ENCODE measurements at regions of chr17 and their contacts with region 1.

Region 1: GRCh38 chr17:44820631-44821212 is 9.4 kb downstream of the GJC1 start:
- DNase-seq: peak; percentile 95
- ATAC-seq: peak; percentile 100
- H3K4me3 ChIP-seq: peak overlapping the region; percentile 51
- H3K27ac ChIP-seq: peak overlapping the region; percentile 62
- H3K4me1 ChIP-seq: peaks cover 23% of the 10 kb centered on the region
- H3K27me3 ChIP-seq: no peaks in the 10 kb centered on the region
- CTCF ChIP-seq: no peak

Region 2: DNA sequence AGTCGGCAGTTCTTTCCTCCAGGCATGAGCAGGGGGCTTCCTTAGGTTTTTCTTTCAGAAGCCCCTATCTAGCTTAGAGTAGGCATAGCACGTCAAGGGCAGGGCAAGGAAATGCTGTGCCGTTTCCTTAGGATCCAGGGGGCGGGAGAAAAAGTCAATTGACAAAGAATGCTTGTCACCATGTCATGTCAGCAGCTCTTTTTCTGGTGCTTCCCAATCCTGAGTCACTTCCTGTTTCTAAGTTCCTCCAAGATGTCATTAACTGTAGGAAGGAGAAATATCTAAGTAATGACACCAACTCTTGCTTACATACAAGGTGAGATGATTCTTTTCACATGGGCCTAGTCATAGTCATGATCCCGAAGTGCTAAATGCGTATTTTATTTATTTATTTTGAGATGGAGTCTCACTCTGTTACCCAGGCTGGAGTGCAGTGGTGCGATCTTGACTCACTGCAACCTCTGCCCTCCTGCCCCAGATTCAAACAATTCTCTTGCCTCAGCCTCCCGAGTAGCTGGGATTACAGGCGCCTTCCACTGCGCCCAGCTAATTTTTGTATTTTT is 25.8 kb before region 1 on chr17:
- CTCF ChIA-PET with region 1: interaction called, 3 read pairs
- POLR2A ChIA-PET with region 1: interaction called, 3 read pairs
- intact Hi-C with region 1: loop called (anchors 1 kb)
- DNase-seq: peak; percentile 94
- ATAC-seq: peak; percentile 84
- H3K4me3 ChIP-seq: no peak overlapping the region
- H3K27ac ChIP-seq: peak overlapping the region; percentile 82
- H3K4me1 ChIP-seq: peaks cover 24% of the 10 kb centered on the region
- H3K27me3 ChIP-seq: no peaks in the 10 kb centered on the region
- CTCF ChIP-seq: no peak

Region 3: GRCh38 chr17:44837243-44837642 is 16.5 kb after region 1 on chr17:
- CTCF ChIA-PET with region 1: interaction called, 10 read pairs
- POLR2A ChIA-PET with region 1: no interaction called
- intact Hi-C with region 1: no loop called
- DNase-seq: peak; percentile 42
- ATAC-seq: no peak
- H3K4me3 ChIP-seq: no peak overlapping the region
- H3K27ac ChIP-seq: no peak overlapping the region
- H3K4me1 ChIP-seq: no peaks in the 10 kb centered on the region; the same call in 1 of the 2 replicates
- H3K27me3 ChIP-seq: no peaks in the 10 kb centered on the region
- CTCF ChIP-seq: no peak

Region 4: DNA sequence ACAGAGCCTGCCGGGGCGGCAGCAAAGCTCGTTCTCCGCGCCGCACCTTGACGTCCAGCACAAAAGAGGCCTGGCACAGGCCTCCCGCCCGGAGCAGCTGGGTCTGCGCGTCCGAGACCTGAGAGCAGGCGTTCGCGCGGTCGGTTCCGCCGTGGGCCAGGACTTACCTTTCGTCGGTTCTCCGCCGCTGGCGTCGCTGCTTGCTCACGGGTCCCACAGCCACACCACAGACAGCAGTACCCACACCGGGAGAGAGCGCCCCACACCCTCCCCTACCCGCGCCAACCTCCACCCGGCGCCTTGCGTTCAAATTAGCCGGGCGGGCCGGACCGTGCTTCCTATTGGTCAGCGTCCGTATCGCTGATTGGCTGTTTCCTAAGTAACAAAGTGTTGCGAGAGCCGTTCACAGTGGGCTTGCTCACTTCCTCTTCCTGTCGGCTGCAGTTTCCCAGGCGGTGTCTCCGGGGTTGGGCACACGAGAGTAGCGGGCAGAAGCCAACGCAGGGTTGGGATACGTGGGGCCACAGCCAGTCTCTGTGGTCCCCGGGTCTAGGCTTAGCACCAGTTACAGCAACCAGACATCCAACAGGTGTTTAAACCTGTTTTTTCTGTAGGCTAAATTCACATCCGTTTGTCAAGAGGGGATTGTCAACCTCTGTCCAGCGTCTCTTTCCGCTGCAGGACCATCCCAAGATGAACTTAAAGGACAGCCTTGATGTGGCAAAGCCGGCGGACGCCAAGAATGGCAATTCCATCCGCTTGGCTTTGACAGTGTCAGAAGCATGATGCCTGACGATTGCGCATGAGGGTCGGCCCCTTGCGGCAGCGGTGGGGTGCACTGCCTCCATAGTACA is 127.0 kb after region 1 on chr17 and contains the start of gene KIF18B:
- CTCF ChIA-PET with region 1: no interaction called
- POLR2A ChIA-PET with region 1: no interaction called
- intact Hi-C with region 1: no loop called
- DNase-seq: peak; percentile 99
- ATAC-seq: peak; percentile 97
- H3K4me3 ChIP-seq: peak within 1 kb of the TSS; percentile 87
- H3K27ac ChIP-seq: peak within 1 kb of the TSS; percentile 72
- H3K4me1 ChIP-seq: peaks cover 36% of the 10 kb centered on the region
- H3K27me3 ChIP-seq: no peaks in the 10 kb centered on the region
- CTCF ChIP-seq: peak; percentile 37; the same call in 1 of the 2 replicates
- total RNA-seq, gene KIF18B: 25.0 and 28.5 TPM in 2 replicates

Region 5: DNA sequence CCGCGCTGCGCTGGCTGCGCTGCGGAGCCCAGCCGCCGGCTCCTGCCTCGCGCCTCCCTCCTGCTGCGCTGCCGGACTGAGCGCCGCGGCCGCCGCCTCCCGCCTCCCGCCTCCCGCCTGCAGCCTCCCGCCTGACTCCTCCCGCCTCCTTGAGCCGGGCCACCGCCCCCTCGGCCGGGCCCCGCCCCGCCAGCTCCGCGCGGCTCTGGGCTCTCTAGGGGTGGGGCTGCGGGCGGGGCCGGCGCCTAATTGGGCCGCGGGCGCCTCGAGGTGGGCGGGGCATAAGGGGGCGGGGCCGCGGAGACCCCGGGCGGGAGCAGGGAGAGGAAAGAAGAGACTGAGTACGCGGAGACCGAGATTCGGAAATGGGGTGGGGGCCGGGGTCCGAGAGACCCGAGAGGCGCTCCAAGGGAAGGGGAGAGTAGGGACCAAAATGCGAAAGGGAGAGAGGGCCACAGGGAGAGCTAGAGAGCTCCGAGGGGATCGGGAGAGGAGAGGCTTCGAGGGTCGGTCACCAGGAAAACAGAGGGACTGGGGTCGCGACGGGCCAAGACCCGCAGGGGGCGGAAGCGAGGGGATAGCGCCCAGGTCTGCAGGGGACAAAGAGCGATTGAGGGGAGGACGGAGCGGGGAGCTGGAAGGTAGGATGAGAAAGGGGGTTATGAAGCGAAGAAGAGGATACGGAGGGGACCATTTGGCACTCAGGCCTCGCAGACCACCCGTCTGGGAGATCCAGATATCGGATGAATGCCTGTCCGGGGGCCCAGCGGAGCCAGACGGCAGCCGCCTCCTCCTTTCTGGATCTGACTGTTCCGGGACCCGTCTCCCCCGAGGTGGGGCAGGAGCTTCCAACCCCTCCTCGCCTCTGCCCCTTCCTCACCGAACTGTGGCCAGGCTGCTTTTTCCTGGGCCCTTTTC is 147.8 kb after region 1 on chr17 and contains the start of gene C1QL1:
- CTCF ChIA-PET with region 1: no interaction called
- POLR2A ChIA-PET with region 1: no interaction called
- intact Hi-C with region 1: no loop called
- DNase-seq: peak; percentile 96
- ATAC-seq: peak; percentile 98
- H3K4me3 ChIP-seq: peak within 1 kb of the TSS; percentile 74
- H3K27ac ChIP-seq: no peak within 1 kb of the TSS
- H3K4me1 ChIP-seq: peaks cover 18% of the 10 kb centered on the region; the same call in 1 of the 2 replicates
- H3K27me3 ChIP-seq: peaks cover 14% of the 10 kb centered on the region
- CTCF ChIP-seq: no peak
- total RNA-seq, gene C1QL1: 2.8 and 4.1 TPM in 2 replicates